Sigmoid colon (tissue), 7 donors: ENCODE measurements at regions of chr12 and their contacts with region 1.

Region 1: GRCh38 chr12:111841750-111842555 is at the start of gene MAPKAPK5:
- DNase-seq: peak; percentile 97
- H3K4me3 ChIP-seq: peak within 1 kb of the TSS; percentile 66 to 99 (median 97)
- H3K27ac ChIP-seq: peak within 1 kb of the TSS; percentile 90 to 97 (median 92)
- H3K4me1 ChIP-seq: peaks cover 0 to 53% (median 42%) of the 10 kb centered on the region in 4 donors
- H3K27me3 ChIP-seq: no peaks in the 10 kb centered on the region
- CTCF ChIP-seq: no peak
- EP300 ChIP-seq: peak in 1 of 4 donors; percentile 71
- POLR2A ChIP-seq: peak; percentile 73 to 81
- total RNA-seq, gene MAPKAPK5: 25.7 to 48.2 (median 36.8) TPM

Region 2: GRCh38 chr12:112012775-112013600 is 171.0 kb after region 1 on chr12 and contains the starts of genes ERP29 and TMEM116:
- intact Hi-C with region 1: loop called (anchors 5 kb)
- DNase-seq: peak; percentile 100
- H3K4me3 ChIP-seq: peak within 1 kb of the TSS; percentile 83 to 100 (median 95)
- H3K27ac ChIP-seq: peak within 1 kb of the TSS; percentile 92 to 97 (median 96)
- H3K4me1 ChIP-seq: peaks cover 0 to 41% (median 29%) of the 10 kb centered on the region in 4 donors
- H3K27me3 ChIP-seq: no peaks in the 10 kb centered on the region
- CTCF ChIP-seq: peak; percentile 52 to 85 (median 70)
- EP300 ChIP-seq: peak in 2 of 4 donors; percentile 8 to 91
- POLR2A ChIP-seq: peak; percentile 96 to 97
- total RNA-seq, gene ERP29: 43.0 to 74.4 (median 54.3) TPM
- total RNA-seq, gene TMEM116: 7.5 to 16.6 (median 9.5) TPM

Region 3: DNA sequence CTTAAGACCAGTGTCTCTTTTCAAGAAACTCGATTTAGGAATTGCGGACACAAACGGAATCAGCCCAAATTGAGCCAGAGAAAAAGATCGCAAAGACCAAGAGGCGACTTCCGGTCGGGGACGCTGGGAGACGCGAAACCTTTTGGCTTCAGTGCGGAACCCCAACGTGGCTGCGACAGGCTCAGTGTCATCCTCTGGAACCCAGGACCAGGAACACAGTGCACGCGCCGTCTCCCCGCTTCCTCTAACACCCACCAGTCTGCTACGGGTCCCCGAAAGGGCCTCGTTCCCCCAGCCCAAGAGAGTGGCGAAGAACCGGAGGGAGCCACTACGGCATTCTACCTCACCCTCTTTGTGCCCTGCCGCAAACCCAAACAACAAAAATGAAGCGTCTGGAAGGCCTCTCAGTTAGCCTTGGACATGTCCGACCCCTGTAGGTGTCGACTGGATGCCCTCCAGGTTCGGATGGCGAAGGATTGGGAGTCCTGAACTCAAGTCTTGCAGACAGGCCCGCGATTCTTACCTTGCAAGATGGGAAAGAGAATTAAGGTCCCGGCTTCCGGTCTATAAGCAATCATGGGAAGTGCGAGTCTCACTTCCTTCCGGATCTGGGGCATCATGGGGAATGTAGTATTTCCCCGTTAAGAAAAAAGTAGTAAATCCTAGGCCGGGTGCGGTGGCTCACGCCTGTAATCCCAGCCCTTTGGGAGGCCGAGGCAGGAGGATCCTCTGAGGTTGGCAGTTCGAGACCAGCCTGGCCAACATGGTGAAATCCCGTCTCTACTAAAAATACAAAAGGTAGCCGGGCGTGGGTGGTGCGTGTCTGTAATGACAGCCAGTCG is 567.3 kb after region 1 on chr12 and contains the start of gene RPL6:
- intact Hi-C with region 1: loop called (anchors 5 kb)
- DNase-seq: peak; percentile 89
- H3K4me3 ChIP-seq: peak within 1 kb of the TSS; percentile 57 to 69 (median 64)
- H3K27ac ChIP-seq: peak within 1 kb of the TSS; percentile 86 to 92 (median 88)
- H3K4me1 ChIP-seq: peaks cover 0 to 26% (median 19%) of the 10 kb centered on the region in 4 donors
- H3K27me3 ChIP-seq: no peaks in the 10 kb centered on the region
- CTCF ChIP-seq: no peak
- EP300 ChIP-seq: no peak
- POLR2A ChIP-seq: peak; percentile 61 to 64
- total RNA-seq, gene RPL6: 1,578 to 2,161 (median 1,920) TPM